ENCODE measurements at regions of chr13 and their contacts with region 1.

Region 1: GRCh38 chr13:25306671-25307464 is 5.4 kb downstream of the NUP58 start:
- DNase-seq: no peak
- ATAC-seq: no peak
- H3K4me3 ChIP-seq: no peak overlapping the region
- H3K4me3 Mint-ChIP-seq: no peak overlapping the region
- H3K27ac ChIP-seq: no peak overlapping the region
- H3K27ac Mint-ChIP-seq: no peak overlapping the region
- H3K4me1 ChIP-seq: peaks cover 9% of the 10 kb centered on the region in 2 experiments
- H3K4me1 Mint-ChIP-seq: peaks cover 40 to 48% (median 42%) of the 10 kb centered on the region in 3 donors
- H3K27me3 ChIP-seq: no peaks in the 10 kb centered on the region
- H3K27me3 Mint-ChIP-seq: no peaks in the 10 kb centered on the region

Region 2: GRCh38 chr13:25319771-25320170 is 12.9 kb after region 1 on chr13:
- CTCF ChIA-PET with region 1: no interaction called
- POLR2A ChIA-PET with region 1: interaction called, 3 to 12 read pairs
- DNase-seq: no peak
- ATAC-seq: no peak
- H3K4me3 ChIP-seq: no peak overlapping the region
- H3K4me3 Mint-ChIP-seq: no peak overlapping the region
- H3K27ac ChIP-seq: no peak overlapping the region
- H3K27ac Mint-ChIP-seq: no peak overlapping the region
- H3K4me1 ChIP-seq: no peaks in the 10 kb centered on the region
- H3K4me1 Mint-ChIP-seq: peaks cover 0 to 3% (median 0%) of the 10 kb centered on the region in 3 donors
- H3K27me3 ChIP-seq: no peaks in the 10 kb centered on the region
- H3K27me3 Mint-ChIP-seq: no peaks in the 10 kb centered on the region